GM10248 (cell line): ENCODE measurements at regions of chr22 and their contacts with region 1.

Region 1: DNA sequence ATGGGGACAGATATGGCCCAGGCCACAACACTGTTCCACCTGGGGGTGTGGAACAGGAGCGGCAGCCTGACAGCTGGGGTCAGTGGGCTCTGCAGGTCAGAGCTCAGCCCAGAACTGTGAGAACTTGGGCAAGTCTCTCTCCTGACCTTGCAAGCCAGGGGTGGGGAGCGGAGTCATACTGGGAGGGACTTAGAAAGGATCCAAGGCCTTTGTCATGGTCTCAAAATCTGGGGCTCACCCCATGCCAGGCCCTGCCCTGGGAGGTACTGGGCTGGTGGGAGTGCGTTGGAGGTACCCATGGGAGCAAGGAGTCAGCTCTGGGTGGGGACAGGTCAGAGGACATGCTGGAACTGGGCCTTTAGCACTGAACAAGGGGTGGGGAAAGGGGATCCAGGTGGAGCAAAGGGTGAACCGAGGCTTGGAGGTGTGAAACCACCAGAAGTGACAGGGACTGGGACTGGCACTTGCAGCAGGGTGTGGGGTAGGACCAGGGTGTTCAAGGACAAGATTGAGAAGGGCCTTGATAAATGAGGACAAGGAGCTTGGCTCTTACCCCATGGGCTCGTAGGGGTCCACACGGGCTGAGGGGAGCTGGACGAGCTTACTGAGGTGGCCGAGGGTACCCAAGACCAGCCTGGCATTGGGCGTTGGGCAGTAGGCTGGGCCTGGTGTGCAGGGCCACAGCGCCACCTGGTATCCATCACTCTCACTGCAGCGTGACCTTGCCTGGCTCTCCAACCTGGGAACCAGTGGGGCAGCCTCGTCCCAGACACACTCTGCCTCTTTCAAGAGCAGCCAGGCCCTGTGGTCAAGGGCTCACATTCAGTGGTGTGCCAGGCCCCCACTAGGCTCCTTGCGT is 7.4 kb upstream of the PMM1 start:
- DNase-seq: peak; percentile 45
- CTCF ChIP-seq: peak; percentile 71

Region 2: GRCh38 chr22:41048791-41049717 is 548.0 kb before region 1 on chr22:
- CTCF ChIA-PET with region 1: no interaction called
- POLR2A ChIA-PET with region 1: no interaction called
- DNase-seq: no peak
- CTCF ChIP-seq: no peak

Region 3: DNA sequence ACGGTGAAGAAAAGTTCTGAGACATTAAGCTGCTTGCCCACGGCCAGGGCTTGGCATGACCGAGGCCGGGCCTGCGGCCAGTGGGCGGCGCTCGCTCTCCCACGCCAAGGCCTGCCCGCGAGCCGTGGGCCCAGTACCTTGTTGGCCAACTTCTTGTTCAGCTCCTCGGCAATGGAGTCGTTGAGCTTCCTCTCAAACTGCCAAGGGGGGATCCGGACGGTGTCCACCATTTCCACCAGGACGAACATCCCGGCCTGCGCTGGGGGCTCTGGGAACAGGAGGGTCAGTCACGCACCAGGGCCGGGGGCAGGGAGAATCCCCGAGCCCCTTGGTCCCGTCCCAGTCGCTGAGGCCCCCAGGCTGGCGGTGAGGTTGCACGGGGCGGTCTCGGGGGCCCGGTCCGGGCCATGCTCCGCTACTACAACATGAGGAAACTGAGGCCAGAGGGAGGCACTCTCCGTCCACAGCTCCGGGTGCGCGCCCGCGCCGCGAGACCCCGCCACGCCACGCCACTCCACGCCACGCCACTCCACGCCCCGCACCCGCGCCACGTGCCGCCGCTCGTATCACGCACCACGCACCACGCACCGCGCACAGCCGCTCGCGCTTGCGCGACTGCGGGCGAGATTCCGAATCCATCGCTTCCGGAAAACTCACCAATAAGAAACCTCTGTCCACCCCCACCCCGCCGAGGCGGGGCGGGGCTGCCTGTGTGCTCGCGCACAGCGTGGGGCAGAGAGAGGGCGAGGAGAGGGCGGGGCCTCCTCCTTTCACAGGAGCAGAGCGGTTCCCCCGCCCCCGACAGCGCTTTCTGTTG is 52.9 kb before region 1 on chr22 and contains the start of gene POLR3H:
- CTCF ChIA-PET with region 1: interaction called, 11 read pairs
- POLR2A ChIA-PET with region 1: no interaction called
- DNase-seq: peak; percentile 100
- CTCF ChIP-seq: peak; percentile 89

Region 4: GRCh38 chr22:41608386-41608785 is 11.4 kb after region 1 on chr22:
- CTCF ChIA-PET with region 1: interaction called, 17 read pairs
- POLR2A ChIA-PET with region 1: no interaction called
- DNase-seq: no peak
- CTCF ChIP-seq: no peak

Region 5: DNA sequence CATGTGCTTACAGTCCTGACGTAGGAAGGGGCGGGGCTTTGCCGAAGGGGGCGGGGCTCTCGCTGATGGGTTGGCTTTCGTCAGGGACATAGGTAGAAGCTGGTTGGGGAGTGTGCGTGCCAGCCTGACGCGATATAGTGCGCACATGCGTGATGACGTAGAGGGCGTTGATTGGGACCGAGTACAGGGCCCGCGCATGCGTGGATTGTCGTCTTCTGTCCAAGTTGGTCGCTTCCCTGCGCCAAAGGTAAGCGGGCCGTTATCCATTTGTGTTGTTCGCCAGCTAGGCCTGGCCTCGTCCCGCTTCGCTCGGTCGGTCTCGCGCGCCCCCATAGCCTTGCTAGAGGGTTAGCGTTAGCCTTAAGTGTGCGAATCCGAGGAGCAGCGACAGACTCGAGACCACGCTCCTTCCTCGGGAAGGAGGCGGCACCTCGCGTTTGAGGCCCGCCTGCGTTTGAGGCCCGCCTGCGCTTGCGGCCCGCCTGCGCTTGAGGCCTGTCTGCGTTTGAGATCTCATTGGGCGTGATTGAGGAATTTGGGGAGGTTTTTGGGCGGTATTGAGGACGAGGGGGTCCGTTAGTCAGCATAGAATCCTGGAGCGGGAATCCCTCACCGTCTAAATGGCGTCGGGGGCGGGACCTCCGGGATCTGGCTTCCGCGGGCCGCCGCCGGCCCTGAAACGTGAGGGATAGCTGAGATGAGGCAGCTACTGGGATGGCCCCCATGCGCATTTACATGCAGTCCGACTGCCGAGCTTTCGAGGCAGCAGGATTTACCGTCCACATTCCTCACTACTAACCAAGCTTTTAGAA is 24.3 kb after region 1 on chr22 and contains the start of gene XRCC6:
- CTCF ChIA-PET with region 1: interaction called, 12 read pairs
- POLR2A ChIA-PET with region 1: no interaction called
- DNase-seq: peak; percentile 100
- CTCF ChIP-seq: no peak